ENCODE measurements at regions of chr4 and their contacts with region 1.

Region 1: DNA sequence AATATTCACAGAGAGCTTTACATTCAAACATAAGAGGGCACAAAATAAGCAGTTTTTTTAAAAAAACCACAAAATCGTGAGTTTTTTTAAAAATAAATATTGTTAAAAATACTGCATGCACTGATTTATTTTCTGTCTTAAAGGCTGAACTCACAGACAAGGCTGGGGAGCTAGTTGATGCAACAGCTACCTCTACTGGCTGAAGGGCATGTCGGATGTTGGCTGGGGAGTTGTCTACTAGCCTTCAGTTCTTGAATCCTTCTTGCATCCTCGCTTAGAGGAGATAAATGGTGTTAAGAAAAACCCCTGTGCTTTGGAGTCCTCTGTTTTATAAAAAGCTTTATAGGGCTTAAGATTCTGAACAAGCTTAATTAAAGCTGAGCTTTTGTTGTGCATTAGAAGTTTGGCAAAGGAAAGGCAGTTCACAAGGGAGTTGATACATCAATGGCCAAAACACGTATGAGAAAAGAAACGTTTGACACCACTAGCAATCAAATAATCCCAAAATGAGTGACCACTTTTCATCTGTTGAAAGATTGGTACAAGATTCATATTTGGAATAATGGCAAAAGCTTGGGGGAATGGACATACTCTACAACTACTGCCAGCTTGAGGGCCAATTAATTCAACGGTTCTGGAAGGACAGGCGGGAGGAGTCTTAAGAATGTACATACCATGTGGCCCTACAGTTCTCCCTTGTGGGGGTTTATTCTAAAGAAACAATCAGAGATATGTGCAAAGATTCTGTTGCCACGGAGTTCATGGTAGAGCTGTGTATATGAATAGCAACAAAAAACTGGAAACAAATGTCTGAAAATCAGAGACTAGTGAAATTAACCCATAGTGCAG is 94.7 kb downstream of the SEL1L3 start:
- DNase-seq: peak; percentile 25 to 70
- H3K4me3 ChIP-seq: no peak overlapping the region
- CTCF ChIP-seq: no peak
- POLR2A ChIP-seq: no peak

Region 2: DNA sequence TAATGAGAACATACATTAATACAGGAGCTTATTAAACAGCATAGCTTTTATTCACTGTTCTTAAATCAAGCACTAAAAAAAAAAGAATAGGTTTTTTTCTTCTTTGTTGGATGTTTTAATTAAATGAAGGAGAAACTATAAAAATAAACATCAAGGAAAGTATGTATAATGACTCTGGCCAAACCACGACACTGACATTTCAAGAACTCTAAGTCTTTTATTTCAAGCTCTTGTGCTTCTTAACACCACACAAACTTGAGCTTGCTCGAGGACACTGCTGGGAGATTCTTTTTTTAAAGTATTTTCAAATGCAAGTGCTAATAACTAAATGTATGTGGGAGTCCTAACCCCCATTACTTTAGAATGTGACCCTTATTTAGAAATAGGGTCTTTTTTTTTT is 1673.4 kb before region 1 on chr4:
- intact Hi-C with region 1: loop called (anchors 5 kb)
- DNase-seq: no peak
- H3K4me3 ChIP-seq: no peak overlapping the region
- CTCF ChIP-seq: no peak
- POLR2A ChIP-seq: no peak

Region 3: DNA sequence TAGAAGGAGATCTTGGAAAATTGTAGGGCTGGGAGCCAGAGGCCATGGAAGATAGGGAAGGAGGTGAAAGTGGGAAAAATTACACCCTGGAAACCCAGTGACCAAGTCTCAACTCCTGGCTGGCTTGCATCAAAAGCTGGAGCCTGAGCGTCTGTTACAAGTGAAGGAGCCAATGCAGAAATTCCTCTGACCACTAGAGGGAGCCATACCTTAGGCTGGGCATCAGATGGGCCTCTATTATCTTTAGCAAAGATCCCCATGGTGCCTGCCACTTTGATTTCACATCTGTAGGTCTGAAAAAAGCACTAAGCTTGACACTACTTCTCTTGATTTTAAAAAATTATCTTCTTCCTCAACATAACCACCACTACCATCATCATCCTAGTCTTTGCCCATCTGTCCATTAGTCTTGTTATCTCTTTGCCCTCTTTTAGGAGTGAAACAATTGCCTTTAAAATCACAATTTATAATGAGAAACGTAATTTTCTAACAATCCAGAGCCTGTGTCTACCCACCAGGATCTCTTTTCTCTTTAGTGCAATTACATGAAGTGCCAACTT is 328.1 kb before region 1 on chr4:
- intact Hi-C with region 1: loop called (anchors 10 kb)
- DNase-seq: peak; percentile 53 to 77
- H3K4me3 ChIP-seq: no peak overlapping the region
- CTCF ChIP-seq: no peak
- POLR2A ChIP-seq: no peak

Measured in lower leg skin (tissue), 4 donors.